Ovary (tissue), 10 donors: ENCODE measurements at regions of chr19 and their contacts with region 1.

Region 1: DNA sequence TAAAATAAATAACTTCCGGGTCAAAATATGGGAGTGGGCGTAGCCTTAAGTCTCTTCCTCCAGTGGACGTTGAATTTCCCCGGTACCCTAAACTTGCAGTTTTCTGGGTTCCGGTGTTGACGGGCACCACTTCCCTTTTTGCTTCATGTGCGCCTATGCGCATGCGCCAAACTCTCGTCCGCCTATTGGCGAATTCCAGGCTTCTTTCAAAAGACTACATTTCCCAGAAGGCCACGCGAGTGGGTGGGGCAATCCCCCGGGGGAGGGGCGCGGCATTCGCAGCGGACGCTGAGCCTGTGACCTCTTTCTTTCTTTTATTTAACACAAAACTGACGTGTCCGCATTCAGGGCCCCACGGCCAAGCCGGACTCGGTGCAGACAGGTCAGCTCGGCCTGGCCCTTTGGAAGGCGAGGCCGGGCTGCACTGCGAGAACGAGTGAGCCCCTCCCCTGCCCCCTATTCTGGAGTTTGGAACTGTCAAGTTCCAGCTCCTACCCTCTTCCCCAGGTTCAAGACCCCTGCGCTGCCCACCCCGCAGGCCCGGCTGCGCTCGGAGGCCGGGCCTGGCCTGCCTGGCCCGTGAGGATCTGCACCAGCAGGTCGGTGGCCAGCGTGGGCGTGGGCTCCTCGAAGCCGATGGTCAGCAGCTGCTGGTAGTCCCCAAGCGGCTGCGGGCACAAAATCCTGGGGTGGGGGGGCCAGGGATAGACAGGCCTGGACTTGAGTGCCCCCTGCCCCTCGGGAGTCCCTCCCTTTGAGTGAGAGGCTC is 4.1 kb downstream of the C19orf67 start:
- DNase-seq: peak; percentile 99 to 100 (median 100)
- H3K4me3 ChIP-seq: peak overlapping the region; percentile 69
- H3K27ac ChIP-seq: peak overlapping the region; percentile 63 to 83
- H3K4me1 ChIP-seq: peaks cover 5% of the 10 kb centered on the region
- H3K27me3 ChIP-seq: no peaks in the 10 kb centered on the region
- CTCF ChIP-seq: no peak
- EP300 ChIP-seq: peak; percentile 64
- POLR2A ChIP-seq: peak; percentile 69

Region 2: GRCh38 chr19:13764101-13764807 is 317.3 kb before region 1 on chr19 and contains the start of gene MRI1:
- intact Hi-C with region 1: loop called in 1 of 4 experiments (anchors 10 kb)
- DNase-seq: peak; percentile 86 to 93 (median 87)
- H3K4me3 ChIP-seq: peak within 1 kb of the TSS; percentile 62
- H3K27ac ChIP-seq: peak within 1 kb of the TSS; percentile 52 to 66
- H3K4me1 ChIP-seq: peaks cover 5% of the 10 kb centered on the region
- H3K27me3 ChIP-seq: no peaks in the 10 kb centered on the region
- CTCF ChIP-seq: no peak
- EP300 ChIP-seq: no peak
- POLR2A ChIP-seq: peak; percentile 35
- total RNA-seq, gene MRI1: 27.5 to 52.6 (median 43.1) TPM

Region 3: GRCh38 chr19:14117668-14118164 is 36.2 kb after region 1 on chr19 and contains the start of gene PRKACA:
- intact Hi-C with region 1: loop called in 1 of 4 experiments (anchors 5 kb)
- DNase-seq: peak; percentile 99
- H3K4me3 ChIP-seq: peak within 1 kb of the TSS; percentile 97
- H3K27ac ChIP-seq: peak within 1 kb of the TSS; percentile 92 to 99
- H3K4me1 ChIP-seq: peaks cover 30% of the 10 kb centered on the region
- H3K27me3 ChIP-seq: no peaks in the 10 kb centered on the region
- CTCF ChIP-seq: no peak
- EP300 ChIP-seq: no peak
- POLR2A ChIP-seq: no peak
- total RNA-seq, gene PRKACA: 33.3 to 280 (median 201) TPM

Region 4: GRCh38 chr19:14136509-14137281 is 55.2 kb after region 1 on chr19 and contains the start of gene ASF1B:
- intact Hi-C with region 1: loop called in 1 of 4 experiments (anchors 10 kb)
- DNase-seq: peak; percentile 98 to 99 (median 99)
- H3K4me3 ChIP-seq: peak within 1 kb of the TSS; percentile 51
- H3K27ac ChIP-seq: peak within 1 kb of the TSS in 1 of 2 donors; percentile 92
- H3K4me1 ChIP-seq: no peaks in the 10 kb centered on the region
- H3K27me3 ChIP-seq: no peaks in the 10 kb centered on the region
- CTCF ChIP-seq: peak; percentile 72 to 98 (median 96)
- EP300 ChIP-seq: peak; percentile 44
- POLR2A ChIP-seq: peak; percentile 56
- total RNA-seq, gene ASF1B: 0.12 to 4.9 (median 1.0) TPM